Ascending aorta (tissue), 2 donors: ENCODE measurements at regions of chr5 and their contacts with region 1.

Region 1: GRCh38 chr5:138503487-138504270 is 38.4 kb downstream of the EGR1 start:
- DNase-seq: no peak
- H3K4me3 ChIP-seq: no peak overlapping the region
- H3K27ac ChIP-seq: peak overlapping the region; percentile 35 to 43
- H3K4me1 ChIP-seq: peaks cover 5 to 19% of the 10 kb centered on the region in 2 donors
- H3K27me3 ChIP-seq: no peaks in the 10 kb centered on the region
- CTCF ChIP-seq: peak; percentile 74 to 80 (median 78)

Region 2: GRCh38 chr5:138449501-138450239 is 54.0 kb before region 1 on chr5:
- intact Hi-C with region 1: loop called (anchors 1 kb)
- DNase-seq: peak; percentile 41 to 94
- H3K4me3 ChIP-seq: peak overlapping the region in 1 of 2 donors; percentile 47
- H3K27ac ChIP-seq: no peak overlapping the region
- H3K4me1 ChIP-seq: peaks cover 0 to 11% of the 10 kb centered on the region in 2 donors
- H3K27me3 ChIP-seq: no peaks in the 10 kb centered on the region
- CTCF ChIP-seq: peak; percentile 92 to 96 (median 96)

Region 3: GRCh38 chr5:138464008-138464387 is 39.7 kb before region 1 on chr5:
- intact Hi-C with region 1: loop called (anchors 1 kb)
- DNase-seq: peak; percentile 71 to 96
- H3K4me3 ChIP-seq: peak overlapping the region; percentile 65 to 91
- H3K27ac ChIP-seq: peak overlapping the region; percentile 98 to 99
- H3K4me1 ChIP-seq: peaks cover 9 to 27% of the 10 kb centered on the region in 2 donors
- H3K27me3 ChIP-seq: no peaks in the 10 kb centered on the region
- CTCF ChIP-seq: peak; percentile 90 to 96 (median 95)

Region 4: DNA sequence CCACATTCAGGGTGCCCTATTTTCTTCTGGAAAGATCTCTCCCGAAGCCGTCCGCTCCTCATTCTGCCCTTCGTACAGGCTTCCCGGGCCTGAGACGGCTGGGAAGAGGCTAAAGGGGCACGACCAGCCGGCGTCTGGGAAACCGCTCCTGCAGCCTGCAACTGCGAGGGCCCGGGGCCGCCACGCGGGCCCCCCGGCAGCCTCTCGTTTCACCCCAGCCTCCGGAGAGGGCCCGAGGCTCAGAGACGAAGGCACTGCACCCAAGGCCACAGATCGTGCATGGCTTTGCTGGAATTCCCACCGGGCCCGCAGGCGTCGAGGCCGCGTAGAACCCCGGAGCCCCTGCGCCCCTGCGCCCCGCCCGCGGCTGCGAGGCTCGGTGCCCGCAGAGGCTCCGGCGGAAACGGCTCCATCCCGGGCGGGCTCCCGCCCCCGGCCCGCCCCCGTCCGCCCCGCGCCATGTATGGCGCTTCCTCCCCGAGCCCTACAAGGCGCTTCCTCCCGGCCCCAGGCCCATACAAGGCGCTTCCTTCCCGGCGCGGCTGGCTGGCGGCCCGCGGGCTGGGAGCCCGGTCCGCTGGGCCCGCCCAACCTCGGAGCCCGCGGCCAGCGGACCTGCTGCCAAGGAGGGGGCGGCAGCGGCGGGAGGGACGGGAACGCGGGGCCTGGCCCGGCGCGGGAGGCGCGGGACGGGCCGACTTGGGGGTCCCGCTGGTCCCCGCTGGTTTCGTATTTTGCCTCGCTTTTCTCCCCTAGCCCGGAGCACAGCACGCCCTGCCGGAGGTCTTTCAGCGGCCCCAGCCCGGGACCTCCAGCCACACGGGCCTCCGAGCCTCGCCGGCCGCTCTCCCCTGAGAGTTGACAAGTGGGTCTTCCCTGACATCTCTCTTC is 11.8 kb before region 1 on chr5:
- intact Hi-C with region 1: loop called (anchors 1 kb)
- DNase-seq: peak; percentile 71 to 96
- H3K4me3 ChIP-seq: peak overlapping the region; percentile 57 to 68
- H3K27ac ChIP-seq: peak overlapping the region; percentile 42 to 78
- H3K4me1 ChIP-seq: peaks cover 9 to 31% of the 10 kb centered on the region in 2 donors
- H3K27me3 ChIP-seq: no peaks in the 10 kb centered on the region
- CTCF ChIP-seq: no peak

Region 5: GRCh38 chr5:139177809-139178588 is 674.3 kb after region 1 on chr5:
- intact Hi-C with region 1: no loop called
- DNase-seq: no peak
- H3K4me3 ChIP-seq: no peak overlapping the region
- H3K27ac ChIP-seq: peak overlapping the region; percentile 72
- H3K4me1 ChIP-seq: peaks cover 13 to 40% of the 10 kb centered on the region in 2 donors
- H3K27me3 ChIP-seq: no peaks in the 10 kb centered on the region
- CTCF ChIP-seq: no peak